ENCODE measurements at regions of chr1 and their contacts with region 1.

Region 1: DNA sequence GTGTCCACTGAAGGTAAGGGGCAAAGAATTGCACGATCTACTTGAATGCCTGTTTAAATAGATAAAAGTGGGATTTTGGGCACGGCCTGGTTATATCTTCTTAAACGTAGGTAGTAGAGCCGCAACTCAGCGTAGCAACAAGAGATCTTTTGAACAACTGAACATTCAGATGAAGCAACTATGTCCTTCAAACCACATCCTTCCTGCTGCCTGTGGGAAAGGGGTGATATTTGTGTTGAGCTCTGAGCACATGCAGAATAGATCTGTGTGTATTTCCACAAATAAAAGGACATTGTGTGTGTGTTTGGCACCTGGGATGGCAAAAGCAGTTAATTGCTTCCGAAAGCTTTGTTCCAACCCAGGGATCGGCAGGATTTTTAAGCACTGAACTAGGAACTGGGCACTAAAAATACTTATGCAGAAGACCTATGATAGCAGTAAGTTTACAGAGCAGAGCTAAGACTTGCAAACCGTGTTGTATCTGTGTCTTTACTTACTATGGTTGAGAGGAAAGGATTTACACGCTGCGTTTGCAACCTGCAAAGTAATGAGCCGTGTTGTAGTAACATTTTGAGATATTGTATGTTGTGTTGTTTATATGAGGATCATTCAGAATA is 333.4 kb downstream of the CHRM3 start:
- DNase-seq: peak; percentile 59
- H3K4me3 Mint-ChIP-seq: peak overlapping the region; percentile 90
- H3K27ac Mint-ChIP-seq: peak overlapping the region; percentile 96
- H3K4me1 Mint-ChIP-seq: peaks cover 37% of the 10 kb centered on the region
- H3K27me3 Mint-ChIP-seq: no peaks in the 10 kb centered on the region

Region 2: GRCh38 chr1:239361403-239361802 is 358.3 kb before region 1 on chr1:
- intact Hi-C with region 1: no loop called
- DNase-seq: no peak
- H3K4me3 Mint-ChIP-seq: no peak overlapping the region
- H3K27ac Mint-ChIP-seq: no peak overlapping the region
- H3K4me1 Mint-ChIP-seq: no peaks in the 10 kb centered on the region
- H3K27me3 Mint-ChIP-seq: peaks cover 2% of the 10 kb centered on the region

Region 3: DNA sequence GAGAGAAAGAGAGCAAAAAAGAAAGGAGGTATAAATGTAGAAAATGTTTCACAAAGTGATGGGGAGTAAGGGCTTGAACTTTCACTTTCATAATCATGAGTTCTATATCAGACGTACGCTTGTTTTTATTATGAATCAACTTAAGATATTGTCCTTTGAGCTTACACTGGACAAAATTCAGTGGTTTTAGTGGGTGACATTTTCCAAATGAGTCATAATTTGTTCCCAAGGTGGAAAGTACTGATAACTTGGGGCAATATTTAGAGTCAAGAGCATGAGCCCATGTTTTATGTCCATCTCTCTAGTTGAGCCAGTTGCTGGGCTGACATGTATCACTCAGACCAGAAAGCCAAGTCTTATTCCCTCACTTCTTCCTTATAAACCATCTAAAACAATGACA is 171.8 kb before region 1 on chr1:
- intact Hi-C with region 1: loop called (anchors 2 kb)
- DNase-seq: no peak
- H3K4me3 Mint-ChIP-seq: no peak overlapping the region
- H3K27ac Mint-ChIP-seq: no peak overlapping the region
- H3K4me1 Mint-ChIP-seq: peaks cover 13% of the 10 kb centered on the region
- H3K27me3 Mint-ChIP-seq: no peaks in the 10 kb centered on the region

Region 4: GRCh38 chr1:239708622-239709021 is 11.1 kb before region 1 on chr1:
- intact Hi-C with region 1: loop called (anchors 1 kb)
- DNase-seq: no peak
- H3K4me3 Mint-ChIP-seq: no peak overlapping the region
- H3K27ac Mint-ChIP-seq: peak overlapping the region; percentile 56
- H3K4me1 Mint-ChIP-seq: peaks cover 19% of the 10 kb centered on the region
- H3K27me3 Mint-ChIP-seq: no peaks in the 10 kb centered on the region

Region 5: GRCh38 chr1:239792157-239792556 is 72.4 kb after region 1 on chr1:
- intact Hi-C with region 1: loop called (anchors 5 kb)
- DNase-seq: no peak
- H3K4me3 Mint-ChIP-seq: no peak overlapping the region
- H3K27ac Mint-ChIP-seq: no peak overlapping the region
- H3K4me1 Mint-ChIP-seq: peaks cover 6% of the 10 kb centered on the region
- H3K27me3 Mint-ChIP-seq: peaks cover 2% of the 10 kb centered on the region

Region 6: DNA sequence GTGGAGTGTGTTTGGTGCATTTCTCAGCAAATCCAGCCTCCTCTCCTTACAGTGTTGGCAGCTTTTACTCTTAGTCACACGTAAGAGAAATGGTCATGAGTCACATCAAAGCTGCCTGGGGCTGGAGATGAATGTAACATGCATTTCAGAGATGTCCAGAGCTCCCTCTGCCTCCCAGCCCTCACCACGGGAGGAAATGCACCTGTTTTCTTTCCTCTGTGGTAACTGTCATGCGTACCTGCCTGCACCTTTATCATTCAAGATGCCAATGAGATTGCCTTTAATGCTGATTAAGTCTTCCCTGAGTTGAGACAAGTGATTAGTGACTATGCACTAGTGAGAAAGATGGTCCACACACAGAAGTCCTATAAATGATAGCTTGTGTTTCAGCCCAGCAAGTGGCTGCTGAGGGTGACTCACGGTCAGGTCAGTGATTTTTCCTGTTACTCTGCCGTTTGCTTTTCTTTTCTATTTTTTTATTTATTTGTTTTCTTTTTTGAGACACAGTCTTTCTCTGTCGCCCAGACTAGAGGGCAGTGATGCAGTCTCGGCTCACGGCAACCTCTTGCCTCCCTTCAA is 94.6 kb after region 1 on chr1:
- intact Hi-C with region 1: loop called (anchors 2 kb)
- DNase-seq: peak; percentile 6
- H3K4me3 Mint-ChIP-seq: no peak overlapping the region
- H3K27ac Mint-ChIP-seq: peak overlapping the region; percentile 4
- H3K4me1 Mint-ChIP-seq: peaks cover 16% of the 10 kb centered on the region
- H3K27me3 Mint-ChIP-seq: peaks cover 1% of the 10 kb centered on the region

Region 7: GRCh38 chr1:239987103-239987745 is 267.5 kb after region 1 on chr1:
- intact Hi-C with region 1: no loop called
- DNase-seq: no peak
- H3K4me3 Mint-ChIP-seq: no peak overlapping the region
- H3K27ac Mint-ChIP-seq: no peak overlapping the region
- H3K4me1 Mint-ChIP-seq: no peaks in the 10 kb centered on the region
- H3K27me3 Mint-ChIP-seq: no peaks in the 10 kb centered on the region